ENCODE measurements at regions of chr18 and their contacts with region 1.

Region 1: DNA sequence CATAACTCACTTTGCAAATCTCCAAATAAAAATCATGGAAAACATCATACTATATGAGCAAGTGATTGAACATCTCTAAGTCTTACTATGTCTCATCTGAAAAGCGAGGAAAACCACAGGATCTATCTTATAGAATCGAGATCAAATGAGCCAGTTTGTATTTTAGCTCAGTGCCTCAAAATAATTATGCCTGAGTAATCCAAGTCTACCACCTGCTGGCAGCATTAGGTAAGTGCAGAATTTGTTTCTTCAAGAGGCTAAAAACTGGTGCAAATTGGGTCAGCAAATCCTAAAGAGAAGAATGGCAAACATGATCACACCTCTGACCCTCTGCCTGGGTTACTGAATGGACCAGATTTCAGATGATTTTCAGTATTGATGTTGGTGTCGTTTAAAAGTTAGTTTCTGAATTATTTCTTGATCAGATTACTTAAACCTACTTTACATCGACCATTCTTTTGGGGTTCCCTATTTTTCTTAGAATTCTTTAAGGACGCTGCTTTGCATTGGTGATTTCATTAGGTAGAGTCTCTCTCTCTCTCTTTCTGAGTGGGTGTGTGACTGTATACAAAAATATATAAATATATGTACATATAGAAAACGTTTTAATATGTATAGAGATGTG is 12.7 kb upstream of the FHOD3 start:
- DNase-seq: peak in 1 of 2 donors; percentile 38
- ATAC-seq: peak in 7 of 8 donors; percentile 9 to 63 (median 45)
- H3K4me3 ChIP-seq: no peak overlapping the region
- H3K27ac ChIP-seq: no peak overlapping the region
- H3K4me1 ChIP-seq: peaks cover 0 to 3% (median 0%) of the 10 kb centered on the region in 9 donors
- H3K27me3 ChIP-seq: peaks cover 0 to 28% (median 3%) of the 10 kb centered on the region in 7 donors
- CTCF ChIP-seq: peak; percentile 82 to 97 (median 90)

Region 2: GRCh38 chr18:35756506-35757117 is 528.2 kb before region 1 on chr18:
- intact Hi-C with region 1: loop called in 6 of 10 experiments (anchors 2 to 10 kb)
- DNase-seq: peak in 1 of 2 donors; percentile 71
- ATAC-seq: peak; percentile 73 to 88 (median 79)
- H3K4me3 ChIP-seq: no peak overlapping the region
- H3K27ac ChIP-seq: no peak overlapping the region
- H3K4me1 ChIP-seq: no peaks in the 10 kb centered on the region
- H3K27me3 ChIP-seq: no peaks in the 10 kb centered on the region
- CTCF ChIP-seq: peak; percentile 74 to 86 (median 81)

Region 3: GRCh38 chr18:35998967-35999366 is 285.8 kb before region 1 on chr18:
- intact Hi-C with region 1: no loop called
- DNase-seq: no peak
- ATAC-seq: no peak
- H3K4me3 ChIP-seq: no peak overlapping the region
- H3K27ac ChIP-seq: no peak overlapping the region
- H3K4me1 ChIP-seq: peaks cover 0 to 4% (median 0%) of the 10 kb centered on the region in 9 donors
- H3K27me3 ChIP-seq: no peaks in the 10 kb centered on the region
- CTCF ChIP-seq: peak in 3 of 9 donors; percentile 8 to 29 (median 24)

Region 4: DNA sequence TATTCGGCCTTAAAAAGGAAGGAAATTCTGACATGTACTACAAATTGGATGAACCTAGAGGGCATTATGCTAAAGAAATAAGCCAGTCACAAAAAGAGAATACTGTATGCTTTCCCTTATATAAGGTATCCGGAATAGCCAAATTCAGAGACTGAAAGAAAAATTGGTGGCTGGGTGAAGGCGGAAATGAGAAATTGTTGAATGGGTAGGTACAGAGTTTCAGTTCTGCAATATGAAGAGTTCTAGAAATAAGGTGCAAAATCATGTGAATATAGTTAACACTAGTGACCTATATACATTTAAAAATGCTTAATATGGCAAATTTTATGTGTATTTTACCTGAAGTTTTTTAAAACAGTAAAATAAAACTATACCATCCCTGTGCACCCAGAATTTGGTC is 269.2 kb before region 1 on chr18:
- intact Hi-C with region 1: loop called in 9 of 10 experiments (anchors 2 to 5 kb)
- DNase-seq: no peak
- ATAC-seq: no peak
- H3K4me3 ChIP-seq: no peak overlapping the region
- H3K27ac ChIP-seq: no peak overlapping the region
- H3K4me1 ChIP-seq: peaks cover 0 to 7% (median 0%) of the 10 kb centered on the region in 9 donors
- H3K27me3 ChIP-seq: no peaks in the 10 kb centered on the region
- CTCF ChIP-seq: no peak

Region 5: GRCh38 chr18:36095936-36096519 is 188.8 kb before region 1 on chr18:
- intact Hi-C with region 1: loop called (anchors 2 to 5 kb)
- DNase-seq: no peak
- ATAC-seq: peak in 1 of 8 donors; percentile 29
- H3K4me3 ChIP-seq: no peak overlapping the region
- H3K27ac ChIP-seq: no peak overlapping the region
- H3K4me1 ChIP-seq: no peaks in the 10 kb centered on the region
- H3K27me3 ChIP-seq: peaks cover 0 to 5% (median 0%) of the 10 kb centered on the region in 7 donors
- CTCF ChIP-seq: peak; percentile 29 to 72 (median 59)

Region 6: GRCh38 chr18:36186911-36187834 is 97.6 kb before region 1 on chr18 and contains the start of gene MOCOS:
- intact Hi-C with region 1: loop called in 4 of 10 experiments (anchors 10 kb)
- DNase-seq: peak; percentile 72 to 82
- ATAC-seq: peak; percentile 91 to 97 (median 95)
- H3K4me3 ChIP-seq: peak within 1 kb of the TSS; percentile 52 to 81 (median 74)
- H3K27ac ChIP-seq: peak within 1 kb of the TSS in 5 of 10 donors; percentile 17 to 48 (median 36)
- H3K4me1 ChIP-seq: peaks cover 0 to 22% (median 8%) of the 10 kb centered on the region in 9 donors
- H3K27me3 ChIP-seq: peaks cover 0 to 13% (median 0%) of the 10 kb centered on the region in 7 donors
- CTCF ChIP-seq: no peak
- total RNA-seq, gene MOCOS: 0.06 to 0.74 (median 0.27) TPM

Region 7: DNA sequence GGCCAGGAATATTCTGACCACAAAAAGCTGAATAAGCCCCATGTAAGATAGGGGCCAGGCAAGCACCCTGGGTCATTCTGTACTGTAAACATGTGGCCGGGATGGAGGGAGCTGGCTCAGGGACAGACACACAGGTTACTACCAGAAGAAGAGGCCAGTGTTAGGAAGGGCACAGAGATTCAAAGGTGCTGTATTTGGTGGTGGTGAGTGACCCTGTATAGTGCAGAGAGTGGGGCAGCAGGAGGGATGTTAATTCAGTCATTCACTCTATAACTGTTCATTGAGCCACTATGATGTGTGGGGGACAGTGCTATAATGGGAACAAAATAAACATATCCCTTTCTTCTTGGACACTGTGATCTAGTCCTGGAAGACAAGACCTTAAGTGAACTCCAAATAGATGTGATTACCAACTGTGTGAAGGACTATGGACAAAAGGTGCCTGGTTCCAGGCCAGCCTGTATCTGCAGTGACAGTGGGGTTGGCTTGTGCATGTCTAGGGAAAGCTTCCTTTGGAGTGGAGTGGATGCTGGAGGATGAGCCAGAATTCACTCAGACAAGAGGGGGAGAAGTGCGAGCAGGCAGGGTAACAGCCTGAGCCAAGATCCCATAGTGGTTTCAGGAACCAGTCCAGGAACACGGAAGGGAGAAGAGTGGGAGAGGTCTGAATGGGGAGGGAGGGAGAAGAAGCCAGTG is 89.2 kb before region 1 on chr18:
- intact Hi-C with region 1: loop called in 1 of 10 experiments (anchors 10 kb)
- DNase-seq: no peak
- ATAC-seq: peak in 4 of 8 donors; percentile 30 to 76 (median 62)
- H3K4me3 ChIP-seq: no peak overlapping the region
- H3K27ac ChIP-seq: no peak overlapping the region
- H3K4me1 ChIP-seq: peaks cover 0 to 8% (median 0%) of the 10 kb centered on the region in 9 donors
- H3K27me3 ChIP-seq: no peaks in the 10 kb centered on the region
- CTCF ChIP-seq: no peak